Adrenal gland (tissue), 19 donors: ENCODE measurements at regions of chr3 and their contacts with region 1.

Region 1: GRCh38 chr3:101573449-101574387 is at the start of gene PCNP:
- DNase-seq: peak; percentile 98 to 99 (median 99)
- H3K4me3 ChIP-seq: peak within 1 kb of the TSS; percentile 80 to 97 (median 95)
- H3K27ac ChIP-seq: peak within 1 kb of the TSS; percentile 96 to 100 (median 98)
- H3K4me1 ChIP-seq: peaks cover 14 to 33% of the 10 kb centered on the region in 2 donors
- H3K27me3 ChIP-seq: no peaks in the 10 kb centered on the region
- CTCF ChIP-seq: peak; percentile 88 to 98 (median 96)
- POLR2A ChIP-seq: peak; percentile 73 to 91
- total RNA-seq, gene PCNP: 41.0 to 133 (median 102) TPM

Region 2: GRCh38 chr3:101635954-101636798 is 62.5 kb after region 1 on chr3:
- intact Hi-C with region 1: loop called (anchors 10 kb)
- DNase-seq: peak; percentile 61 to 80 (median 71)
- H3K4me3 ChIP-seq: no peak overlapping the region
- H3K27ac ChIP-seq: no peak overlapping the region
- H3K4me1 ChIP-seq: no peaks in the 10 kb centered on the region
- H3K27me3 ChIP-seq: no peaks in the 10 kb centered on the region
- CTCF ChIP-seq: peak; percentile 44 to 68 (median 54)
- POLR2A ChIP-seq: no peak

Region 3: GRCh38 chr3:101643861-101644613 is 70.3 kb after region 1 on chr3:
- intact Hi-C with region 1: loop called (anchors 10 kb)
- DNase-seq: peak; percentile 23 to 70 (median 50)
- H3K4me3 ChIP-seq: no peak overlapping the region
- H3K27ac ChIP-seq: peak overlapping the region in 1 of 5 donors; percentile 17
- H3K4me1 ChIP-seq: peaks cover 6 to 9% of the 10 kb centered on the region in 2 donors
- H3K27me3 ChIP-seq: no peaks in the 10 kb centered on the region
- CTCF ChIP-seq: no peak
- POLR2A ChIP-seq: no peak